ENCODE measurements at regions of chr2 and their contacts with region 1.

Region 1: DNA sequence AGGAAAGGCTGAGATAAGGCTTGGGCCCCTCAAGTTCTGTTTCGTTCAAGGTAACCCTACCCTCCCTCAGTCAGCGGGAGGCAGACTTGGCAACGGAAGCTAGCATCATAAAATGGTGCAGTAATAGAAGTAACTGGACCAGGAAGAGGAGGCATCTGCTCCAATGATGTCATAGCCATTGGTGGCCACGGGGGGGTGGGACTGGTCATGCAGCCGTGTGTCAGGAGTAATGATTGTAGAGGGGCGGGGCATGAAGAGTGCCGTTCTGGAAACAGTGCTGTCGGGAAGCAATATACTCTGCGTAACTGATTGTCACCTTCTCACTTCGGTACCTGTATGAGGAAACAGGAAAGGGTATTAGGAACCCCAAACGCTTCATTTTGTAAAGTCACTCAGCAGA is 6.9 kb upstream of the POLR2D start:
- DNase-seq: no peak
- ATAC-seq: no peak
- H3K4me3 ChIP-seq: no peak overlapping the region
- H3K4me3 Mint-ChIP-seq: no peak overlapping the region
- H3K27ac ChIP-seq: no peak overlapping the region
- H3K27ac Mint-ChIP-seq: no peak overlapping the region
- H3K4me1 ChIP-seq: peaks cover 3% of the 10 kb centered on the region
- H3K4me1 Mint-ChIP-seq: peaks cover 2% of the 10 kb centered on the region
- H3K27me3 ChIP-seq: no peaks in the 10 kb centered on the region
- H3K27me3 Mint-ChIP-seq: no peaks in the 10 kb centered on the region
- CTCF ChIP-seq: no peak

Region 2: GRCh38 chr2:127884436-127885345 is 19.8 kb after region 1 on chr2:
- CTCF ChIA-PET with region 1: no interaction called
- POLR2A ChIA-PET with region 1: no interaction called
- intact Hi-C with region 1: loop called in 1 of 2 experiments (anchors 2 kb)
- DNase-seq: peak in 1 of 9 experiments; percentile 9
- ATAC-seq: no peak
- H3K4me3 ChIP-seq: peak overlapping the region; percentile 38
- H3K4me3 Mint-ChIP-seq: peak overlapping the region; percentile 86
- H3K27ac ChIP-seq: no peak overlapping the region
- H3K27ac Mint-ChIP-seq: peak overlapping the region; percentile 87
- H3K4me1 ChIP-seq: peaks cover 22% of the 10 kb centered on the region
- H3K4me1 Mint-ChIP-seq: peaks cover 66% of the 10 kb centered on the region
- H3K27me3 ChIP-seq: no peaks in the 10 kb centered on the region
- H3K27me3 Mint-ChIP-seq: no peaks in the 10 kb centered on the region
- CTCF ChIP-seq: no peak

Region 3: DNA sequence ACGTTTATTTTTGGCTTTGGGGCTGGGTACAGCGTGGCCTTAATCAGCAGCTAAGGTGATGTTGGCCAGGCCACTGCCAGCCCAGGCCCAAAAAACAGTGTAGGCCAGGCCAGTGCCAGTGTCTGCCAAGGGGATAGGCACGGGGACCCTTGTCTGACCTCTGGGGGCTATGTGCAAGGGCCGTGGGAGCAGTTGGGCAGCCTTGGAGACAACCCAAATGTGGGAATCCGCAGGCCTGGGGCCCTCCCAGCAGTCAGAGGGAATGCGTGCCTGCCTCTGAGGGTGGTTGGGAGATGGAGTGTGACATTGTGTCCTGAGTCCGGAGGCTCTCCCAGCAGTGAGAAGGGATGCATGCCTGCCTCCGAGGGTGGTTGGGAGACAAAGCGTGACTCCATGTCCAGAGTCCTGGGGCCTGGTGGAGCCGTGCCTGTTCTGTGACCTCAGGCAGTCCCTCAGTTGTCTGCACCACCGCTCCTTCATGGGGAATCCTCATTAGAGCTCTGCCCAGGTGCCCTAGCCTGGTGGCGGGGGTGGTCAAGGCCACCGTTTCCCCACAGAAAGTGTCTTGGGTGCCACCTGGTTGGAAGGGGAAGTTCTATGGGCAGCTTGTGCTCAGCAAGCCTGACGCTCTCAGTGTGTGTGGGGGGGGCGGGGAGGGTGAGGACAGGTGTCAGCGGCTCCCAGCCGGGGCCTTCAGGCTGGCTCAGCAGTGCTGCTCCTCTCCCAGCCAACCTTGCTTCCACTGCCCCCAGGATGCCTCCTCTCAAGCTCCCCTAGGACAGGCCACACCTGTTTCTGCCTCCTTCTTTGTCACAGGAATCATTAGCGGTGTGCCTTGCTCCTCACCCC is 639.2 kb after region 1 on chr2:
- CTCF ChIA-PET with region 1: no interaction called
- POLR2A ChIA-PET with region 1: no interaction called
- intact Hi-C with region 1: no loop called
- DNase-seq: peak in 2 of 9 experiments; percentile 16 to 44
- ATAC-seq: no peak
- H3K4me3 ChIP-seq: no peak overlapping the region
- H3K4me3 Mint-ChIP-seq: no peak overlapping the region
- H3K27ac ChIP-seq: no peak overlapping the region
- H3K27ac Mint-ChIP-seq: no peak overlapping the region
- H3K4me1 ChIP-seq: no peaks in the 10 kb centered on the region
- H3K4me1 Mint-ChIP-seq: no peaks in the 10 kb centered on the region
- H3K27me3 ChIP-seq: no peaks in the 10 kb centered on the region
- H3K27me3 Mint-ChIP-seq: no peaks in the 10 kb centered on the region
- CTCF ChIP-seq: no peak